ENCODE measurements at regions of chr16 and their contacts with region 1.

Region 1: DNA sequence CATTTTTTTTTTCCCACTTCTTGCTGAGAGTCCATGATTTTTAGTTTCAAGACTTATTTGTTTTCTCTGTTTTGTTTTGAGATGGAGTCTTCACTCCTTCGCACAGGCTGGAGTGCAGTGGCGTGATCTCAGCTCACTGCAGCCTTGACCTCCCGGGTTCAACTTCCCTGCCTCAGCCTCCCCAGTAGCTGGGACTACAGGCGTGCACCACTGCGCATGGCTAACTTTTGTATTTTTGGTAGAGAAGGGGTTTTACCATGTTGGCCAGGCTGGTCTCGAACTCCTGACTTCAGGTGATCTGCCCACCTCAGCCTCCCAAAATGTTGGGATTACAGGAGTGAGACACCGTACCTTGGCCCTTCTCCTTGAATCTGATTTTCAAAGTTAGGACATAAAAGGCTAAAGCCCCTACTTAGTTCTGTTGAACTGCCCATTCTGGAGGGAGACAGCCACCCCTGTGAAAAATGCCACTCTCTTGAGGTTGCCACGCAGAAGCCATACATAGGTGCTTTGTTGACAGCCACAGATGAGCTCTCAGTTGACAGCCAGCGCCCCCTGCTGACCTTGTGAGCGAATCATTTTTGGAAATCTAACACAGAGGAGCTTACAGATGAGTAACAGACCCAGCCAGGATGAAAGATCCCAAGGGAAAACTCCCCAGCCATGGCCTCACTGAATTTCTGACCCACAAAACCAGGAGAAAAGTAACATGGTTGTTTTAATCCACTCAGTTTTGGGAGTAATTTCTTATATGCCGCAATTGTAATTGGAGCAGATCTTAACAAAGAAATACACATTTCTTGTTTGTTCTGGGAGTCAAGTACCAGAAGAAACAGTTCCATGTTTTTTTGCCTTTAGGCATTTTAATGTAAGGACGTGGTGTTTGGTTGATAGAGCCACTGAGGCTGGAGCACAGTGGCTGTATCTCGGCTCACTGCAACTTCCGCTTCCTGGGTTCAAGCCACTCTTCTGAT is 38.8 kb downstream of the PKD1L3 start:
- DNase-seq: peak; percentile 52
- ATAC-seq: peak; percentile 96
- H3K4me3 ChIP-seq: no peak overlapping the region
- H3K27ac ChIP-seq: no peak overlapping the region
- H3K4me1 ChIP-seq: peaks cover 9% of the 10 kb centered on the region
- H3K27me3 ChIP-seq: no peaks in the 10 kb centered on the region; a peak in 1 of 4 replicates
- CTCF ChIP-seq: peak; percentile 82 to 96 (median 87)
- EP300 ChIP-seq: no peak
- POLR2A ChIP-seq: no peak
- RAD21 ChIP-seq: peak; percentile 94

Region 2: DNA sequence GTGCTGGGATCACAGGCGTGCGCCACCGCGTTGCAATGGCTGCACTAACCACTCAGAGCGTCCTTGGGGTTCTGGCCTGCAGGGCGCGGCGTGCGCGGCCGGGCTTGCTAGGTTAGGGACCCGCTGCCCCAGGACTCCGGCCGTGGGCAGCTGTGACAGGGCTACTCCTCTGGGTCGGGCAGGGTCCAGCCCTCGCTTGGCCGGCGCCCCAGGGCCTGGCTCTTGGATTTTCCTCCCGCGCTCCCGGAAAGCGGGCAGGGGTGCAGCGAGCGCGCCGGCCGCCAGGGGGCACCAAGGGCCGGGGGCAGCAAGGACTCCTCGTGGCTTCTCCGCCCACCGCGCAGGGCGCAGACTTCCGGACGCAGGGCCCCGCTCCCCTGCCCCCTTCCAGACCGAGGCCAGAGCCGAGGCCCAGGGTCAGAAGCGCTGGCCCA is 520.0 kb before region 1 on chr16:
- CTCF ChIA-PET with region 1: no interaction called
- POLR2A ChIA-PET with region 1: no interaction called
- RAD21 ChIA-PET with region 1: no interaction called
- SMC1A ChIA-PET with region 1: no interaction called
- in situ Hi-C with region 1: no loop called
- intact Hi-C with region 1: no loop called
- DNase-seq: no peak
- ATAC-seq: no peak
- H3K4me3 ChIP-seq: no peak overlapping the region
- H3K27ac ChIP-seq: no peak overlapping the region
- H3K4me1 ChIP-seq: no peaks in the 10 kb centered on the region
- H3K27me3 ChIP-seq: no peaks in the 10 kb centered on the region; a peak in 1 of 4 replicates
- CTCF ChIP-seq: peak in 2 of 3 experiments; percentile 3 to 37; a peak in 1 of 6 replicates
- EP300 ChIP-seq: no peak
- POLR2A ChIP-seq: no peak
- RAD21 ChIP-seq: 0 out of 2 replicates have a peak, but pooled peaks have one; percentile 11

Region 3: DNA sequence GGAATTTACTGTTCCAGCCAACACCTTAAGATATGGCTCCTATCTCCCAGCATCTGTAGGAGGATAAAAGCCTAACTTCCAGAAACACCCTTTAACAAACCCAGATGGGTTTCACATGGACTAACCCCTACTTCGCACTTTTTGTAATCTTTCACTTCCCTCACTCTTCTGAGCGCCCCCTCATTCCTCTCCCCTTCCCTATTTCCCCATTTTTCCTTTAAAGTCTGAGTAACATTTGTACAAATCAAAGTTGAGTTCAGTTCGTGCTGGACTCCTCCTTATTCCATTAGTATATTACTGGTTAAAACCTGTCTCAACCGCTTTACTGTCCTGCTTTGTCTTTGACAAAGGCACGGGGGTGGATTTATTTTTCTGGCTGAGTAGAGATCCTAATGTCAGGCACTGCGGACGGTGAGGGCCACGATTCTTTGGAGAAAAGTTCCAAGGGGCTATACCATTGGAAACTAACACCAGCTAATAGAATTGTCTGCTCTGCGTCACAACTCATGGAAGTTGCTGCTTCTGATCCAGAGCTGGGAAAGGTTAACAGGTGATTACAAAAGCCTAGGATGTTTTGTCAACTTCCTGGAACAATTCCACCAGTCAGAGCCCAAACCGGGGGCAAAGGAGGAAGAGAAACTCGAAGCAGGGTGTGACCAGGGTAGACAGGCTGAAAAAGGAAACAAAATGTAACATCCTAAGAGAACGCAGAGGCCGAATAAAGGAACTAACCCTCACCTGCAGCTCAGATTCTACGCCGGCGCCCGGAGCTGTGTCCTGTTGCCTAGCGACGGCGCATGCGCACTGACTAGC is 397.0 kb before region 1 on chr16:
- CTCF ChIA-PET with region 1: interaction called, 17 read pairs
- POLR2A ChIA-PET with region 1: no interaction called
- RAD21 ChIA-PET with region 1: interaction called, 31 read pairs
- SMC1A ChIA-PET with region 1: interaction called, 6 read pairs
- in situ Hi-C with region 1: no loop called
- intact Hi-C with region 1: no loop called
- DNase-seq: no peak
- ATAC-seq: peak; percentile 1; the same call in 2 of the 3 replicates
- H3K4me3 ChIP-seq: peak overlapping the region; percentile 76
- H3K27ac ChIP-seq: peak overlapping the region; percentile 91
- H3K4me1 ChIP-seq: peaks cover 3% of the 10 kb centered on the region; the same call in 1 of the 2 replicates
- H3K27me3 ChIP-seq: no peaks in the 10 kb centered on the region
- CTCF ChIP-seq: no peak
- EP300 ChIP-seq: no peak
- POLR2A ChIP-seq: no peak
- RAD21 ChIP-seq: no peak

Region 4: DNA sequence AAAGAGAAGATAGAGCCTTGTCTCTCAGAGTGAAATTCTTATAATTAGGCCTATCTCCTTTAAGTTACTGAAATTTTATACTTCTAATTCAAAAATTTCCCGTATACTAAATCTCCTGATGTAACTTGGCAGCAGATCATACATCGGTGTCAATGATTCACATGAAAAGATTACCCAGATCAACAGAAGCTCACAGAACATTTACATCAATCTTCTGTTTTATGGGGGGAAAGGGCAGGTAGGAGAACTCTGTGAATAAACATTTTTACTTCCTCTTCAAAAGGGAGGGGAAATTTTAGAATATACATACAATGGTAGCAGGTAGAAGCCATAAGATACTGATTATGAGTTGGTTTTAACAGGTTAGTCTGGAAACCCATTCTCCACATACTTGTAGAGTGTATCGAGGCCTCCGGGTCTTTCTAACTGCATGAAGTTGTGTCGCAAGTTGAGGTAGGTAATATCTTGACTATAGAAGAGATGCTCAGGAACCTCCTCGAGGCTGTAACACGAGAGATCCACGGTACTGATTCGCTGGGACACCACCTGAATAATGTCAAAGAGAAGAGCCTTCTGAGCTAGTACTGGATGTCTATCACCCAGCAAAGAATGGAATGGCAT is 279.9 kb before region 1 on chr16:
- CTCF ChIA-PET with region 1: interaction called, 4 read pairs
- POLR2A ChIA-PET with region 1: no interaction called
- RAD21 ChIA-PET with region 1: no interaction called
- SMC1A ChIA-PET with region 1: no interaction called
- in situ Hi-C with region 1: no loop called
- intact Hi-C with region 1: loop called (anchors 10 kb)
- DNase-seq: no peak
- ATAC-seq: no peak
- H3K4me3 ChIP-seq: no peak overlapping the region
- H3K27ac ChIP-seq: no peak overlapping the region
- H3K4me1 ChIP-seq: no peaks in the 10 kb centered on the region
- H3K27me3 ChIP-seq: no peaks in the 10 kb centered on the region
- CTCF ChIP-seq: no peak
- EP300 ChIP-seq: no peak
- POLR2A ChIP-seq: no peak
- RAD21 ChIP-seq: no peak

Region 5: DNA sequence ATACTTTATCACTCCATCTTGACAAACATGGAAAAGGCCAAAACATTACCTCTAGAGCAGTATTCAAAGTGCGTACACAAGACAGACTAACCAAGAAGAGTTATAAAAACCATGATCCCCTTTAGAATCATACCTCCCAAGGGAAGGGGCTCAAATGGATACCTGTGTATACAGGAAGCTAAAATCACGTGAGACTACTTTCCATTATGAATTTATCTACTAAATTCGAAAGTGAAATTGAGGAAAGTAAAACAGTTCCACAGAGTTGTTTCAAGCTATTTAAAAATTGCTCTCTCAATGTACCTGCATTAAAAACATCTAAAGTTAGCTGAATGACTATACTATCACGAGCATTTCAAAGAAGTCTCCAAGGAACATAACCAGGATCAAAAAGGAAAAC is 185.4 kb before region 1 on chr16:
- CTCF ChIA-PET with region 1: interaction called, 11 read pairs
- POLR2A ChIA-PET with region 1: no interaction called
- RAD21 ChIA-PET with region 1: interaction called, 5 read pairs
- SMC1A ChIA-PET with region 1: interaction called, 8 read pairs
- in situ Hi-C with region 1: no loop called
- intact Hi-C with region 1: no loop called
- DNase-seq: peak; percentile 15
- ATAC-seq: peak; percentile 80
- H3K4me3 ChIP-seq: no peak overlapping the region
- H3K27ac ChIP-seq: peak overlapping the region; percentile 44; the same call in 1 of the 2 replicates
- H3K4me1 ChIP-seq: peaks cover 9% of the 10 kb centered on the region
- H3K27me3 ChIP-seq: no peaks in the 10 kb centered on the region
- CTCF ChIP-seq: no peak
- EP300 ChIP-seq: no peak
- POLR2A ChIP-seq: no peak
- RAD21 ChIP-seq: no peak

Region 6: GRCh38 chr16:71929048-71929447 is 32.3 kb before region 1 on chr16:
- CTCF ChIA-PET with region 1: interaction called, 19 read pairs
- POLR2A ChIA-PET with region 1: no interaction called
- RAD21 ChIA-PET with region 1: interaction called, 3 read pairs
- SMC1A ChIA-PET with region 1: interaction called, 5 read pairs
- in situ Hi-C with region 1: no loop called
- intact Hi-C with region 1: no loop called
- DNase-seq: no peak
- ATAC-seq: no peak
- H3K4me3 ChIP-seq: no peak overlapping the region
- H3K27ac ChIP-seq: no peak overlapping the region
- H3K4me1 ChIP-seq: no peaks in the 10 kb centered on the region
- H3K27me3 ChIP-seq: no peaks in the 10 kb centered on the region
- CTCF ChIP-seq: no peak
- EP300 ChIP-seq: no peak
- POLR2A ChIP-seq: no peak
- RAD21 ChIP-seq: no peak

Region 7: DNA sequence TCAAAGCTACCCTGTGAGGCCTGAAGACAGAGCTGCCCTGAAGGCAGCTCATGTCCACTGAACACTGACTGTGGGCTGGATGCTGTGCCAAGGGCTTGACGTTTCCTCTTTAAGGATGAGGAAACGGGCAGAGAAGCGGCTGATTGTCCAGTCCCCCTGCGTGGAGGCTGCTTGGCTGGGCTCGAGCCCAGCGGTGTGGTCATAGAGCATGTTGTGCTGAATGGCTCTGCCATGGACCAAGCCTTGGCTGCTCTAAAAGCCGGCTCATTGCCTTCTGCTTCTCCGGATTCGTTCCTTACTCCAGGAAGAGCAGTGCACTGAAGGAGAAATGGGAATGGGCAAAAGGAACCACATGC is 64.4 kb after region 1 on chr16:
- CTCF ChIA-PET with region 1: no interaction called
- POLR2A ChIA-PET with region 1: no interaction called
- RAD21 ChIA-PET with region 1: no interaction called
- SMC1A ChIA-PET with region 1: no interaction called
- in situ Hi-C with region 1: no loop called
- intact Hi-C with region 1: no loop called
- DNase-seq: no peak
- ATAC-seq: no peak
- H3K4me3 ChIP-seq: no peak overlapping the region
- H3K27ac ChIP-seq: no peak overlapping the region
- H3K4me1 ChIP-seq: no peaks in the 10 kb centered on the region
- H3K27me3 ChIP-seq: no peaks in the 10 kb centered on the region
- CTCF ChIP-seq: no peak
- EP300 ChIP-seq: no peak
- POLR2A ChIP-seq: no peak
- RAD21 ChIP-seq: no peak